GM12878 (cell line): ENCODE measurements at regions of chr10 and their contacts with region 1.

Region 1: GRCh38 chr10:96043033-96043932 is at the start of gene CCNJ:
- DNase-seq: peak; percentile 39
- ATAC-seq: peak; percentile 90
- H3K4me3 ChIP-seq: peak within 1 kb of the TSS; percentile 95
- H3K27ac ChIP-seq: peak within 1 kb of the TSS; percentile 74
- H3K4me1 ChIP-seq: peaks cover 6% of the 10 kb centered on the region
- H3K27me3 ChIP-seq: no peaks in the 10 kb centered on the region
- CTCF ChIP-seq: peak in 1 of 3 experiments; percentile 21; a peak in 1 of 6 replicates
- EP300 ChIP-seq: no peak
- POLR2A ChIP-seq: peak; percentile 84
- RAD21 ChIP-seq: no peak
- polyA plus RNA-seq, gene CCNJ: 0.56 to 1.5 TPM

Region 2: DNA sequence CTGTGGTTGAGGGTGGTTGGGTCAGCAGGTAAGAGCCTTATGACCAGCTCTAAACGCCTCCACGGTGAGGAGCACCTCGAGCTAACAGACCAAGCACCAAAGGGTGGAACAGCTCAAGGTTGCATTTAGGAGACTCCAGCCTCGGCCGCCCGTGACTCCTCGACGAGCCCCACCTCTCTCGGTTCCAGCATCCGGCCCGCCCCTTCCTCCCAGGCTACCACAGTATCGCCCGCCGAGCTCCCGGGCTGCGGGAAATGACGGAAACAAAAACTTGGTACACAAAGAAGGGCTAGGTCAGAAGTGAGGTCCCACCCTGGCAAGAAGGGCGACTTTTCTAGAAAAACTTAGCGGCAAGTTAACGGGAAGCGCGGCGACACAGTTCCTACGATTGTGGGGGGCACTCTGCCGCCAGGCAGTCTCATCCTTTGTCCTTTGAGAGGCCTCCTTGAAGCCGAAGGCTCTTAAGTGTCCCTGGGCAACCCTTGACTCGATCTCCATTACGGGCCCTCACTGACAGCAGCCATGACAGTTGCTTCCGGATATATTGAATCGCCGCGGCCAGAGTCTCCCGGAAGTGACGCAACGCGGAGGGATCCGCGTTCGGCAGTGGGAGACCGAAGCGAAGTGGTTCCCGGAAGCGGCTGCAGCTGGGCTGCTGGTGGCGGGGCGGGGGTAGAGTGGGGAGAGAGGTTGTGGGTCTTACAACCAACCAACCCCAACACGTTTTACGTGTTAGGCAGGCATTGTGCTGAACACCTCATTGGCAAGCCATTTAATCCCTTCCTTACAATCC is 46.6 kb after region 1 on chr10:
- CTCF ChIA-PET with region 1: no interaction called
- POLR2A ChIA-PET with region 1: no interaction called
- RAD21 ChIA-PET with region 1: interaction called, 4 read pairs
- SMC1A ChIA-PET with region 1: interaction called, 5 read pairs
- in situ Hi-C with region 1: no loop called
- intact Hi-C with region 1: loop called (anchors 2 kb)
- DNase-seq: peak; percentile 84
- ATAC-seq: peak; percentile 96
- H3K4me3 ChIP-seq: peak overlapping the region; percentile 79
- H3K27ac ChIP-seq: peak overlapping the region; percentile 95
- H3K4me1 ChIP-seq: 0 out of 2 replicates have a peak, but pooled peaks cover 3% of the 10 kb centered on the region
- H3K27me3 ChIP-seq: no peaks in the 10 kb centered on the region
- CTCF ChIP-seq: no peak
- EP300 ChIP-seq: peak in 1 of 2 experiments; percentile 54; a peak in 1 of 4 replicates
- POLR2A ChIP-seq: peak; percentile 97
- RAD21 ChIP-seq: no peak

Region 3: DNA sequence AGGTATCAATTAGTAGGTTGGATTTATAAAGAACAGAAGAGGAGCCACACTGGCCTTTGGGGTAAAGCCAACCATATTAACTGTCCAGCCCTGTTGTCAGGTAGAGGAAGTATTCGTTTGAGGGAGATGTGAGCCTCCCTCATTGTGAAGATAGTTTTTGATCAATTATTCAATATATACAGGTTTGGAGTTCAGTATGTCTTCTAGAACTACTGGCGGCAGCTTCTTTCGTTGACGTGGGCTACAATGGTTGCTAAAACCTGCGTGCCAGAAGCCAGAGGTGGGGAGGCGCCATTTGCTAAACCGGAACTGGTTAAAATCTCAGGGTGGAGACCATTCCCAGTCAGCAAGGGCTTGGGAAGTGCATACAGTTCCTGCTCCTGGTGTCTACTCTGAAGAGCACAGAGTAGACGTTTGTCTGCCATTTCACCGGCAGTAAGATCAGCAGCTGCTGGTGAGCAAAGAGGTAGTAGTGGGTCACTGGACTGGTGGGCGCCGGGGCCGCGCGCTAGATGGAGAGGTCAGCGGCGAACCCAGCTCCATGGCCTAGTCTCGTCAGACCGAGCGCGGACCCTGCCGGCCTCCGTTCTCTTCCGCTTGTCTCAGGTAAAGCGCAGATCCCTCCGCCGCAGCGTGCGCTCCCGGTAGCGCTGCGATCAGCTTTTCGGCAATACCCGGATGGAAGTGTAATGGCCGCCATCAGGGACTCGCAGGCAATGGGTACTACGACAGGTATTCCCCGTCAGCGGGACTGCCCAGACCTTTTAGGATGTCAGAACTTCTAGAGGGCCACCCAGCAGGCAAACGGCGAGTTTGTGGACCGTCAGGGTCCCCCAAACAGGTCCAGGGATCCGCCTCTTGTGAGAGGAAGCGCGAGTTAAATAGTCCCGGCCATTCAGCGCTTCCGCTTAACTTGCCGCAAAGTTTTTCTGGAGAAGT is 86.4 kb after region 1 on chr10 and contains the start of gene ZNF518A:
- CTCF ChIA-PET with region 1: interaction called, 3 read pairs
- POLR2A ChIA-PET with region 1: interaction called, 3 read pairs
- RAD21 ChIA-PET with region 1: interaction called, 3 read pairs
- SMC1A ChIA-PET with region 1: interaction called, 4 read pairs
- in situ Hi-C with region 1: no loop called
- intact Hi-C with region 1: loop called (anchors 5 kb)
- DNase-seq: peak; percentile 82
- ATAC-seq: peak; percentile 91
- H3K4me3 ChIP-seq: peak within 1 kb of the TSS; percentile 87
- H3K27ac ChIP-seq: peak within 1 kb of the TSS; percentile 100
- H3K4me1 ChIP-seq: no peaks in the 10 kb centered on the region; the same call in 1 of the 2 replicates
- H3K27me3 ChIP-seq: no peaks in the 10 kb centered on the region
- CTCF ChIP-seq: no peak
- EP300 ChIP-seq: no peak
- POLR2A ChIP-seq: peak; percentile 92
- RAD21 ChIP-seq: no peak
- polyA plus RNA-seq, gene ZNF518A: 3.7 to 11.3 TPM

Region 4: DNA sequence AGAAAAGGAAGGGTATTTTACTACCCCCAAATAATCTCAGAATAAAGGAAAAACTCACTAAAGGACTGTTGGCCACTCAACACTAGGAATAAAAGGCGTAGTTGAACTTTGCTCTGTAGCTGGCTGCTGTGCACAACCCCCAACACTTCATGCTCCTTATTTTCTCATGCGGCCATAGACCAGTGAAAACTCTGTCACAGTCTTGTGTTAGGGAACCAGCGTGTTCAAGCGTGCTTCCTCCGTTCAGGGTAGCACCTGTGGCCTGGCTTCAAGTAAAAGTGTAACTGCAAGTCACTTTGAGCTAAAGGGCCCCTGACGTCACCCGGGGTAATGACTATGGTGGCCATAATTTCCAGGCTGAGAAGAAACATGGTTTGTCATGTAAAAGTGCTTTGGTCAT is 201.1 kb after region 1 on chr10:
- CTCF ChIA-PET with region 1: no interaction called
- POLR2A ChIA-PET with region 1: no interaction called
- RAD21 ChIA-PET with region 1: no interaction called
- SMC1A ChIA-PET with region 1: no interaction called
- in situ Hi-C with region 1: no loop called
- intact Hi-C with region 1: no loop called
- DNase-seq: peak; percentile 89
- ATAC-seq: peak; percentile 98
- H3K4me3 ChIP-seq: 0 out of 2 replicates have a peak overlapping the region, but pooled peaks have one; percentile 18
- H3K27ac ChIP-seq: peak overlapping the region; percentile 67
- H3K4me1 ChIP-seq: peaks cover 24% of the 10 kb centered on the region
- H3K27me3 ChIP-seq: no peaks in the 10 kb centered on the region
- CTCF ChIP-seq: no peak
- EP300 ChIP-seq: peak; percentile 41 to 56; a peak in 3 of 4 replicates
- POLR2A ChIP-seq: peak; percentile 46
- RAD21 ChIP-seq: peak; percentile 3; the same call in 1 of the 2 replicates

Region 5: DNA sequence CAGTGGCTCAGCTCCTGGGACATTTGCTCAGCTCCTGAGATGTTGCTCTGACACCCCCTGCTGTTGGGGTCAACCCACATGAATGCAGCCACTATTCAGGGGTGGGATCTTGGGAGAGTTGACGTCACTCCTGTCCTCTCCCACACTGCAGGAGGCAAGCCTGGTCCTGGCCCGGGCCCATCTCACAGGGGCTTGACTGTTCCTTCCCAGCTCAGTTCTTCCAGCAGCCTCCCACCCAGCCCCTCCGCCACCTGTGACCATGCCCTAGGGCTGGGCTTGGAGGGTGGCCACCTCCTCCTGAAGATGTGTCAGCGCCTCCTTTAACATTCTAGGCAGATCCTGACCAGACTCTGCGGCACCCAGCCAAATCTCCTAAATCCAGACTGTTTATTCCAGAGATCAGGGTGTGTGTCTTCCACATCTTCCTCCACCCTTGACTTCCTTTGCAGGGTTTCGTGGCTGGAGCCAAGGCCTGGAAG is 334.6 kb after region 1 on chr10:
- CTCF ChIA-PET with region 1: no interaction called
- POLR2A ChIA-PET with region 1: no interaction called
- RAD21 ChIA-PET with region 1: no interaction called
- SMC1A ChIA-PET with region 1: no interaction called
- in situ Hi-C with region 1: no loop called
- intact Hi-C with region 1: no loop called
- DNase-seq: no peak
- ATAC-seq: no peak
- H3K4me3 ChIP-seq: no peak overlapping the region
- H3K27ac ChIP-seq: no peak overlapping the region
- H3K4me1 ChIP-seq: peaks cover 8% of the 10 kb centered on the region
- H3K27me3 ChIP-seq: no peaks in the 10 kb centered on the region; a peak in 2 of 4 replicates
- CTCF ChIP-seq: no peak
- EP300 ChIP-seq: no peak
- POLR2A ChIP-seq: no peak
- RAD21 ChIP-seq: no peak